ENCODE measurements at regions of chr2 and their contacts with region 1.

Region 1: GRCh38 chr2:241009601-241010530 is 11.4 kb downstream of the SNED1 start:
- DNase-seq: peak; percentile 43 to 85 (median 68)
- ATAC-seq: peak; percentile 75 to 87
- H3K4me3 Mint-ChIP-seq: peak overlapping the region; percentile 58 to 90 (median 78)
- H3K27ac Mint-ChIP-seq: peak overlapping the region; percentile 88 to 97 (median 96)
- H3K4me1 Mint-ChIP-seq: peaks cover 37 to 82% (median 61%) of the 10 kb centered on the region in 4 donors
- H3K27me3 Mint-ChIP-seq: no peaks in the 10 kb centered on the region

Region 2: GRCh38 chr2:240933048-240933965 is 76.6 kb before region 1 on chr2:
- POLR2A ChIA-PET with region 1: no interaction called
- DNase-seq: peak in 2 of 10 donors; percentile 15 to 53
- ATAC-seq: no peak
- H3K4me3 Mint-ChIP-seq: no peak overlapping the region
- H3K27ac Mint-ChIP-seq: no peak overlapping the region
- H3K4me1 Mint-ChIP-seq: no peaks in the 10 kb centered on the region
- H3K27me3 Mint-ChIP-seq: peaks cover 0 to 9% (median 2%) of the 10 kb centered on the region in 5 donors

Region 3: GRCh38 chr2:240998120-240998994 is 11.5 kb before region 1 on chr2 and contains the start of gene SNED1:
- POLR2A ChIA-PET with region 1: interaction called, 31 read pairs
- DNase-seq: peak; percentile 48 to 88 (median 72)
- ATAC-seq: peak; percentile 74 to 78
- H3K4me3 Mint-ChIP-seq: peak within 1 kb of the TSS; percentile 74 to 95 (median 87)
- H3K27ac Mint-ChIP-seq: peak within 1 kb of the TSS; percentile 47 to 96 (median 93)
- H3K4me1 Mint-ChIP-seq: peaks cover 17 to 46% (median 38%) of the 10 kb centered on the region in 4 donors
- H3K27me3 Mint-ChIP-seq: peaks cover 0 to 22% (median 2%) of the 10 kb centered on the region in 5 donors
- polyA plus RNA-seq, gene SNED1: 0.60 to 3.0 (median 1.4) TPM

Region 4: GRCh38 chr2:241064008-241064801 is 54.3 kb after region 1 on chr2:
- POLR2A ChIA-PET with region 1: interaction called, 10 read pairs
- DNase-seq: peak; percentile 22 to 79 (median 51)
- ATAC-seq: peak; percentile 87 to 89
- H3K4me3 Mint-ChIP-seq: peak overlapping the region in 9 of 10 donors; percentile 7 to 81 (median 74)
- H3K27ac Mint-ChIP-seq: peak overlapping the region in 8 of 10 donors; percentile 57 to 83 (median 75)
- H3K4me1 Mint-ChIP-seq: peaks cover 0 to 17% (median 13%) of the 10 kb centered on the region in 4 donors
- H3K27me3 Mint-ChIP-seq: no peaks in the 10 kb centered on the region

Region 5: GRCh38 chr2:241102239-241102803 is 92.5 kb after region 1 on chr2 and contains the start of gene MTERF4:
- POLR2A ChIA-PET with region 1: interaction called, 10 read pairs
- DNase-seq: peak; percentile 79 to 90 (median 85)
- ATAC-seq: peak; percentile 91 to 94
- H3K4me3 Mint-ChIP-seq: peak within 1 kb of the TSS; percentile 94 to 99 (median 97)
- H3K27ac Mint-ChIP-seq: peak within 1 kb of the TSS; percentile 92 to 99 (median 98)
- H3K4me1 Mint-ChIP-seq: peaks cover 20 to 75% (median 69%) of the 10 kb centered on the region in 4 donors
- H3K27me3 Mint-ChIP-seq: no peaks in the 10 kb centered on the region
- polyA plus RNA-seq, gene MTERF4: 46.4 to 82.1 (median 57.8) TPM